ENCODE measurements at regions of chr3 and their contacts with region 1.

Region 1: DNA sequence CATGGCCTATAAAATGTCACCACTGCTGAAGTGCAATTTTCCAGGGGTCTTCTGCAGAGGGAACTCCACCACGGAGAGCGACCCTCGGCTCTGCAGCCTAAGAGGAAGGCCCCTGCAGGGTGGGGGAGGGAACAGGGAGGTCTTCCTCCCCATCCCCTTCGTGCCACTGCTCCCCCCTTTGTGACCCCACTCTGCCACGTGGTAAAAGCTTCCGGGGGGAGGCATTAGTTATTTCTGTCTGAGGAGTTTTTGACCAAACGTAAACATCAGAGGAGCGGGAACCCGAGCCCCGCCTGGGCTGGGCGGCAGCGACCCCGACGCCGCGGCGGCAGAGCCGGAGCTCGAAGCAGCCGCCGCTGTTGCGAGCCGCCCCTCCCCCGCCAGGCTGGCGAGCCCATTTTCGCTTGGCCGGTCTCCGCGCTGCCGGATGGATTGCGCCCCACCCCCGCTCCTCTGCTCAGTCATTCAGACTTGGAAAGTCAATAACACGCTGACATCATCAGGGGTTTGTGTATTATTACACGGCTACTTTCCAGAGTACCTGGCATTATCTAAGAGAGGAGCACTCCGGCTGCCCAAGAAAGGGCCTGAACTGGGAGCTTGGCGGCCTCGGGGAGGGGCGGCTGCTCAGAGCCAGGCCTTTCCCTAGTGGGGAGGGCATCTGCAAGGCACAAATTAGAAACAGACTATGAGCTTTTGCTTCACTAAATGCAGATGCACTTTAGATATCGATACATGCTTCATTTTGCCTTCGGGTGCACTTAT is 162.5 kb upstream of the TBL1XR1 start:
- DNase-seq: peak; percentile 93 to 97
- ATAC-seq: peak; percentile 85 to 87
- H3K4me3 ChIP-seq: peak overlapping the region; percentile 39
- H3K27ac ChIP-seq: peak overlapping the region; percentile 89 to 98
- H3K4me1 ChIP-seq: peaks cover 48% of the 10 kb centered on the region
- CTCF ChIP-seq: no peak
- EP300 ChIP-seq: peak; percentile 77 to 91; a peak in 4 of 5 replicates
- POLR2A ChIP-seq: no peak
- RAD21 ChIP-seq: peak; percentile 48 to 91

Region 2: DNA sequence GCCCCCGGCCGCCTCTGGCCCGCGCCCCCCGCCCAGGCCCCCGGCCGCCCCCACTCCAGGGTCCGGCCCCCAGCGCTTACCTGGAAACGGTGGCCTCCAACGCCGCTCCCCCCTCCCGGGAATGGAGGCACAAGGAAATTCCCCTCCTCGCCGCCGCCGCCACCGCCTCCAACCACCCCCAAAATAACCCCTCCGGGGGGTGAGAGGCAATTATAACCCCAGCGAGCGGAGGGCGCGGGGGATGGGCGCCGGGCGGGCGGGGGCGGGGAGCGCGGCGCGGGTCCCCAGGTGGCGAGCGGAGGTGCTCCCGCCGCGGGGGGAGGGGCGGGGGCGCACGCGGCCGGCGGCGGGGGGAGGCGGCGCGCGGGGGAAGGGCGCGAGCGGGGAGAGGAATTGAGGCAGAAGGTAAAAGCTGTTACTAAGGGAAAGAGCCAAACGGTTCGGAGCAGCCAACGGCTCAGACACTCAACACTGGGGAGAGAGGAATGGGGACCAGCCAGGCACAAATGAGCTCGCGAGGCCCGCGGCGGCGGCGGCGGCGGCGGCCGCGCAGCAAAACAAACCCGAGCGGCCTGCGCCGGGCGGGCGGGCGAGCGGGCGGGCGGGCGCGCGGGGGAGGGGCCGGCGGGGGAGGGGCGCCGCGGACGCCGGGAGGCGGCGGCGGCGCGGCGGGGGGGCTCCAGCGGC is 162.6 kb before region 1 on chr3 and contains the start of gene TBL1XR1:
- CTCF ChIA-PET with region 1: interaction called, 4 read pairs
- POLR2A ChIA-PET with region 1: interaction called, 31 read pairs
- DNase-seq: peak; percentile 66 to 93
- ATAC-seq: peak; percentile 75 to 84
- H3K4me3 ChIP-seq: peak within 1 kb of the TSS; percentile 96
- H3K27ac ChIP-seq: peak within 1 kb of the TSS; percentile 97 to 100
- H3K4me1 ChIP-seq: peaks cover 29% of the 10 kb centered on the region
- CTCF ChIP-seq: no peak
- EP300 ChIP-seq: peak in 1 of 2 experiments; percentile 60; a peak in 1 of 5 replicates
- POLR2A ChIP-seq: no peak
- RAD21 ChIP-seq: peak; percentile 13 to 42; a peak in 3 of 5 replicates
- polyA plus RNA-seq, gene TBL1XR1: 106 and 125 TPM in 2 replicates

Region 3: GRCh38 chr3:177345049-177345972 is 14.5 kb before region 1 on chr3:
- CTCF ChIA-PET with region 1: no interaction called
- POLR2A ChIA-PET with region 1: no interaction called
- DNase-seq: peak; percentile 81 to 92
- ATAC-seq: peak; percentile 99
- H3K4me3 ChIP-seq: no peak overlapping the region
- H3K27ac ChIP-seq: peak overlapping the region; percentile 77 to 94
- H3K4me1 ChIP-seq: peaks cover 32% of the 10 kb centered on the region
- CTCF ChIP-seq: no peak
- EP300 ChIP-seq: peak in 1 of 2 experiments; percentile 53; a peak in 1 of 5 replicates
- POLR2A ChIP-seq: no peak
- RAD21 ChIP-seq: peak; percentile 32 to 33; a peak in 2 of 5 replicates